Aorta (tissue), 5 donors: ENCODE measurements at regions of chr3 and their contacts with region 1.

Region 1: GRCh38 chr3:134600685-134601463 is 49.9 kb downstream of the KY start:
- DNase-seq: peak; percentile 65 to 89
- ATAC-seq: peak; percentile 75
- H3K4me3 ChIP-seq: no peak overlapping the region
- H3K27ac ChIP-seq: no peak overlapping the region
- H3K4me1 ChIP-seq: no peaks in the 10 kb centered on the region
- H3K27me3 ChIP-seq: no peaks in the 10 kb centered on the region

Region 2: GRCh38 chr3:134640872-134641470 is 40.1 kb after region 1 on chr3:
- intact Hi-C with region 1: loop called in 1 of 2 experiments (anchors 5 kb)
- DNase-seq: no peak
- ATAC-seq: no peak
- H3K4me3 ChIP-seq: no peak overlapping the region
- H3K27ac ChIP-seq: no peak overlapping the region
- H3K4me1 ChIP-seq: no peaks in the 10 kb centered on the region
- H3K27me3 ChIP-seq: no peaks in the 10 kb centered on the region

Region 3: DNA sequence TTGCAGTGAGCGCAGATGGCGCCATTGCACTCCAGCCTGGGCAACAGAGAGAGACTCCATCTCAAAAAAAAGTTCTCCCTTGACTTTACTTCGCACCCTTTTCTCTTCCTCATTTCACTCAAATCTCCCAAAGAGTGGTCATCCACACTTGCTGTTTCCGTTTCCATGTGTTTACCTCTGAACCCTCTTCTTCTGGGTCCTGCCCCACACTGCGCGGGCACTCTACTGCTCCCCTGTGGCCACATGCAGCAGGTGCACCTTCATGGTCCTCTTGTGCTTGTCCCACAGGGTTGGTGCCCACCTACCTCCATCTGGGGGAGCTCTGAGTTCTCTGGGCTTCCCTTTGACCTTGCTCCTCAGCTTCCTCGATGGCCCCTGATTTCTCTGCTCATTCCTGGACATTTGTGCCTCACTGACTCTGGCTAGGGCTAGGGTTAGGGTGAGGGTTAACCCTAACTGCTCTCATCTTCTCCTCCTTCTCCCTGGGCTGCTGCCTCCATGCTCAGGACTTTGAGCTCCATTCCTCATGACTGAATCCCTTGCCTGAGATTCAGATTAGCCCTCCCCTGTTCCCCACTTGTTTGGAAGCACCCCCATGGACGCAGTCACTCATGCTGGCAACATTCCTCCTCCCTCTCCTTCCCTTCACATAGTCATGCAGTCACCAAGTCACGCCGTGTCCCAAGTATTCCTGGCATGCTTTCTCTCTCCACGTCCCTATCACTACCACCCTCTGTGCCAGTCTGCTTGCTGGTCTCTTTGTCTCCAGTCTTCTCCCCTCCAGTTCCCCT is 76.5 kb after region 1 on chr3:
- intact Hi-C with region 1: loop called (anchors 5 kb)
- DNase-seq: no peak
- ATAC-seq: peak; percentile 56
- H3K4me3 ChIP-seq: no peak overlapping the region
- H3K27ac ChIP-seq: no peak overlapping the region
- H3K4me1 ChIP-seq: no peaks in the 10 kb centered on the region
- H3K27me3 ChIP-seq: no peaks in the 10 kb centered on the region

Region 4: DNA sequence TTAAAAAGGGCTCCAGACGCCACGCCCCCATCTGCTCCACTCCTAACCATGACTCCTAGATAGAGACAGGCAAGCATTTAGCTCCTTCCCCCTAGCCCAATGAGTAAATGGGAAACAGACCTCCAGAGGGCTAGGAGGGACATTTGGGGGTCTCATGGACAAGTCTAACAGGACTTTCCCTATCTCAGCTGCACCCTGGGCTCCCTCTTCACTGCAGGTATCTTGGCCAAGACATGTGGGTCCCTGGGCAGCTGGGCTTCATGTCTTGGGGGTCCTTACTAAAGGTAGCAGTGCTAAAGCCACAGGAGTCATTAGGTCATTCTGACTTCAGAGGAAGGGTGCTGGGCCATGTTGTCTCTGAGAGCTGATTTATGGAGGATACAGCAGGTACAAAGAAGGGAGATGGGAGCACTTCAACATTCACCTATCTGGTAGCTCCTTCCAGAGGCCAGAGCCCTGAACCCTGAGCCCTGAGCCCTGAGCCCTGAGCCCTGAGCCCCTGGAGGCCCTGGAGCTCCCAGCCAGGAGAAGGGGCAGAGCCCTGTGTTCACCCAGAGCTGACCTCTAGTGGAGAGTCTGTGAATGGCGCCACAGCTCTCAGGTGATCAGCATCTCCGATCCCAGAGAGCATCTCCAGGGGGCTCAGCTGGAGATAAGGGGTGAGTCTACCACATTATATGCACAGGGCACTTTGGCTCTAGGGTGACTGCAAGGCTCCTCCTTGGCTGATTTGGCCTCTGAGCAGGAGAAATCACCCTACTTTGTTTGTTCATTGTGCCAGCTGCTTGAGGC is 154.1 kb after region 1 on chr3:
- intact Hi-C with region 1: loop called (anchors 2 to 5 kb)
- DNase-seq: peak in 1 of 2 donors; percentile 51
- ATAC-seq: peak; percentile 36
- H3K4me3 ChIP-seq: no peak overlapping the region
- H3K27ac ChIP-seq: no peak overlapping the region
- H3K4me1 ChIP-seq: no peaks in the 10 kb centered on the region
- H3K27me3 ChIP-seq: no peaks in the 10 kb centered on the region

Region 5: GRCh38 chr3:135895106-135895733 is 1294.3 kb after region 1 on chr3:
- intact Hi-C with region 1: loop called (anchors 5 to 10 kb)
- DNase-seq: peak; percentile 65 to 85
- ATAC-seq: peak; percentile 64
- H3K4me3 ChIP-seq: no peak overlapping the region
- H3K27ac ChIP-seq: no peak overlapping the region
- H3K4me1 ChIP-seq: no peaks in the 10 kb centered on the region
- H3K27me3 ChIP-seq: no peaks in the 10 kb centered on the region